Sigmoid colon (tissue), 7 donors: ENCODE measurements at regions of chr4 and their contacts with region 1.

Region 1: GRCh38 chr4:176377780-176378179 is 58.0 kb downstream of the SPCS3 start:
- DNase-seq: no peak
- H3K4me3 ChIP-seq: no peak overlapping the region
- H3K27ac ChIP-seq: no peak overlapping the region
- H3K4me1 ChIP-seq: no peaks in the 10 kb centered on the region
- H3K27me3 ChIP-seq: no peaks in the 10 kb centered on the region
- CTCF ChIP-seq: peak in 1 of 4 experiments; percentile 26
- EP300 ChIP-seq: no peak
- POLR2A ChIP-seq: no peak

Region 2: DNA sequence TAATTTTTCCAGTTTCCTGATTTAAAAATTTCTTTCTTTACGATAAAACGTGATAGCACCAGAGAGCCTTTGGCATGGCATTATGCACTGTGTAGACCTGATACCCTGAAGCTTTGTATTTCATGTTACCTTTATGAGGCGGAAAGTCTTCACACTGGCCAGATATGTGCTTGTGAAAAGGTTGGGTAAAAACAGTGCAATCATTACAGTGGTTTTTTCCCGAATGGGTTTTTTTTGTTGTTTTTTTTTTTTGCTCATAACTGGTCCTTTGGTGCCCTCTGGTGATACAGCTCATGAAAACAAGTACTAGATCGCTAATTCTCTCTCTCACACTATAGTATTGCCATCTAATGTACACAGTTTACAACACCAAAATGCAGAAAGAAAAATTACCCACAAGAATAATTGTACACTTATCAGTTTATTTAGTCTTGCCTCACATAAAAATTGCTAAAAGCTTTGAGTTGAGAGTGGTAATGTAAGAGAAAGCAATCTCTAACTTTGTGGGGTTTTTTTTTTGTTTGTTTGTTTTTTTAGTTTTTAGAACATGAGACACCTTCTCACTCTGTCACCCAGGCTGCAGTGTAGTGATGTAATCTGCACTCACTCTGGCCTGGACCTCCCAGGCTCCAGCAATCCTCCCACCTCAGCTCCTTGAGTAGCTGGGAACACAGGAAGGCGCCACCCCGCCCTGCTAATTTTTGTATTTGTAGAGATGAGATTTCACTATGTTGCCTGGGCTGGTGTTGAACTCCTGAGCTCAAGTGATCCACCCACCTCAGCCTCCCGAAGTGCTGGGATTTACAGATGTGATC is 36.7 kb before region 1 on chr4:
- intact Hi-C with region 1: no loop called
- DNase-seq: no peak
- H3K4me3 ChIP-seq: peak overlapping the region in 2 of 4 donors; percentile 14 to 20
- H3K27ac ChIP-seq: no peak overlapping the region
- H3K4me1 ChIP-seq: peaks cover 0 to 33% (median 11%) of the 10 kb centered on the region in 4 donors
- H3K27me3 ChIP-seq: no peaks in the 10 kb centered on the region
- CTCF ChIP-seq: peak in 3 of 4 experiments; percentile 22 to 54 (median 42)
- EP300 ChIP-seq: no peak
- POLR2A ChIP-seq: no peak

Region 3: DNA sequence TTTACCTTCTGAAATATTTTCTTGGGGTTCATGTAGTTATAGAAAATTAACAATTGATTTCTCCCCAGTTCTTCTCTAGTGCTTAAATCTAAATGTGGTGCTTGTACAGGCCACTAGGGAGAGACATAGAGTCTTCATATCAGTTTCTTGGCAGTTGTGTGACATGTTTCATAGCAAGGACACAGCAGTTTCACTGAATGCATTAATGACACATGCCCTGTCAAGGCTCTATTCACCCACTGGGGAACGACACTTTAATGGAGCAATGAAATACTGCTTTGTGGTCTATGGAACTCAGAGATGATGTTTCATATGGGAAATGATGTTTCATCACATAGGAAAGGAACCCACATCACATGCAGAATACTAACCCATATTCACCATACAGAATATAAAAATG is 412.2 kb after region 1 on chr4:
- intact Hi-C with region 1: no loop called
- DNase-seq: no peak
- H3K4me3 ChIP-seq: no peak overlapping the region
- H3K27ac ChIP-seq: no peak overlapping the region
- H3K4me1 ChIP-seq: peaks cover 0 to 18% (median 12%) of the 10 kb centered on the region in 4 donors
- H3K27me3 ChIP-seq: no peaks in the 10 kb centered on the region
- CTCF ChIP-seq: peak in 3 of 4 experiments; percentile 3 to 46 (median 8)
- EP300 ChIP-seq: no peak
- POLR2A ChIP-seq: no peak

Region 4: GRCh38 chr4:177047070-177047850 is 669.5 kb after region 1 on chr4:
- intact Hi-C with region 1: loop called (anchors 5 kb)
- DNase-seq: peak; percentile 67
- H3K4me3 ChIP-seq: no peak overlapping the region
- H3K27ac ChIP-seq: no peak overlapping the region
- H3K4me1 ChIP-seq: no peaks in the 10 kb centered on the region
- H3K27me3 ChIP-seq: no peaks in the 10 kb centered on the region
- CTCF ChIP-seq: peak in 3 of 4 experiments; percentile 28 to 73 (median 50)
- EP300 ChIP-seq: no peak
- POLR2A ChIP-seq: no peak